Mammary epithelial cell (primary cell): ENCODE measurements at regions of chr9 and their contacts with region 1.

Region 1: DNA sequence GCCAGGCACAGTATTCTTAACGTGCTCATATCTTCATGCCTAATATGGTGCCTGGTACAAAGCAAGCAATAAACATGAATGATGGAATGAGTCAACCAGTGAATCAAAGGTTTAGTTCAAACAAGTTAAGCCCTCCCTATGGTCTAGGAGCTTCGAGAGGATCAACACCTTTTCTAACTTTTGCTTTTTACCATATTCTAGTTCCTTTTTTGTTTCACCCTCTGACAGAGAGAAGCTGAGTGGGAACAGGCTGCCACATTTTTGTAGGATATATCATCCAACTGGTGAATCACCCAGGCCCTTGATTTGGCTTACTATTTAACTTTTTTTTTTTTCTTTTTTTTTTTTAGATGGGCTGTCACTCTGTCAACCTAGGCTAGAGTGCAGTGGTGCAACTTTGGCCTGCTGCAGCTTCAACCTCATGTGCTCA is 39.3 kb upstream of the TNC start:
- DNase-seq: peak; percentile 83
- H3K4me3 ChIP-seq: no peak overlapping the region
- H3K27ac ChIP-seq: peak overlapping the region; percentile 51
- H3K4me1 ChIP-seq: peaks cover 17% of the 10 kb centered on the region
- H3K27me3 ChIP-seq: no peaks in the 10 kb centered on the region
- CTCF ChIP-seq: no peak

Region 2: GRCh38 chr9:114641967-114642366 is 515.3 kb before region 1 on chr9:
- CTCF ChIA-PET with region 1: interaction called, 12 read pairs
- dilution Hi-C with region 1: no loop called
- in situ Hi-C with region 1: no loop called
- intact Hi-C with region 1: no loop called
- DNase-seq: no peak
- H3K4me3 ChIP-seq: no peak overlapping the region
- H3K27ac ChIP-seq: no peak overlapping the region
- H3K4me1 ChIP-seq: no peaks in the 10 kb centered on the region
- H3K27me3 ChIP-seq: no peaks in the 10 kb centered on the region
- CTCF ChIP-seq: no peak

Region 3: GRCh38 chr9:115071176-115071575 is 86.1 kb before region 1 on chr9:
- CTCF ChIA-PET with region 1: no interaction called
- dilution Hi-C with region 1: loop called (anchors 5 kb)
- in situ Hi-C with region 1: no loop called
- intact Hi-C with region 1: no loop called
- DNase-seq: no peak
- H3K4me3 ChIP-seq: no peak overlapping the region
- H3K27ac ChIP-seq: no peak overlapping the region
- H3K4me1 ChIP-seq: no peaks in the 10 kb centered on the region
- H3K27me3 ChIP-seq: no peaks in the 10 kb centered on the region
- CTCF ChIP-seq: no peak

Region 4: DNA sequence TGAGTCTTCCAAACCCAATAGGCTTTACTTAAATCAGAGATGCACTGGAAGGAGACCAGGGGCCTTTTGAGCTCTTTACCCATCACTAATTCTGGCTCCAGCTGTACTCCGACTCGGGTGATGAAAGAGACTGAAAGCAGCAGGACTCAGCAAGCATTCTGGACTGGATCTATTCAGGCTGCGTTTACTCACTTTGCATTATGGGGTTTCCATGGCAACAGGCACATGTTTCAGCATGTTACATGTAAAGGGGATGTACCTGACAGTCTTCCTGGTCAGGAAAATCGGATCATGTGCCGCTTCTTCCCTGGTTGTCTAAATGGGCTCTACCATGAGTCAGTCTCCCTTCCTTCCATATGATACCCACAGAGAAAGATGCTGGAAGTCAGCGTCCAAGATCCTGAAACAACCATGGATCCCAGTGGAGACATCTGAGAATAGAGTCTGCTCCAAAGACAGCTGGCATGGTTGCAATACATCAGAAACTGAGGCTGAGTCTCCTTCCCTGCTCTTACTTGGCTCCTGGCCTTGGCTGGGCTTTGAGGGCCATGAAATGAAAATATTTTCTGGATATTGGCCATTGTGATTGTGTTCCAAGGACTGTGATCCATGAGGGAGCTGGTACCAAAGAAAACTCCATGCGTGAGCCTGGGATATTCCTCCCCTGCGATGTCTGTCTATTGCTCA is 63.2 kb after region 1 on chr9:
- CTCF ChIA-PET with region 1: no interaction called
- dilution Hi-C with region 1: loop called (anchors 5 kb)
- in situ Hi-C with region 1: no loop called
- intact Hi-C with region 1: no loop called
- DNase-seq: peak; percentile 49
- H3K4me3 ChIP-seq: no peak overlapping the region
- H3K27ac ChIP-seq: no peak overlapping the region
- H3K4me1 ChIP-seq: no peaks in the 10 kb centered on the region
- H3K27me3 ChIP-seq: no peaks in the 10 kb centered on the region
- CTCF ChIP-seq: no peak